HEK293 (cell line): ENCODE measurements at regions of chr19 and their contacts with region 1.

Region 1: DNA sequence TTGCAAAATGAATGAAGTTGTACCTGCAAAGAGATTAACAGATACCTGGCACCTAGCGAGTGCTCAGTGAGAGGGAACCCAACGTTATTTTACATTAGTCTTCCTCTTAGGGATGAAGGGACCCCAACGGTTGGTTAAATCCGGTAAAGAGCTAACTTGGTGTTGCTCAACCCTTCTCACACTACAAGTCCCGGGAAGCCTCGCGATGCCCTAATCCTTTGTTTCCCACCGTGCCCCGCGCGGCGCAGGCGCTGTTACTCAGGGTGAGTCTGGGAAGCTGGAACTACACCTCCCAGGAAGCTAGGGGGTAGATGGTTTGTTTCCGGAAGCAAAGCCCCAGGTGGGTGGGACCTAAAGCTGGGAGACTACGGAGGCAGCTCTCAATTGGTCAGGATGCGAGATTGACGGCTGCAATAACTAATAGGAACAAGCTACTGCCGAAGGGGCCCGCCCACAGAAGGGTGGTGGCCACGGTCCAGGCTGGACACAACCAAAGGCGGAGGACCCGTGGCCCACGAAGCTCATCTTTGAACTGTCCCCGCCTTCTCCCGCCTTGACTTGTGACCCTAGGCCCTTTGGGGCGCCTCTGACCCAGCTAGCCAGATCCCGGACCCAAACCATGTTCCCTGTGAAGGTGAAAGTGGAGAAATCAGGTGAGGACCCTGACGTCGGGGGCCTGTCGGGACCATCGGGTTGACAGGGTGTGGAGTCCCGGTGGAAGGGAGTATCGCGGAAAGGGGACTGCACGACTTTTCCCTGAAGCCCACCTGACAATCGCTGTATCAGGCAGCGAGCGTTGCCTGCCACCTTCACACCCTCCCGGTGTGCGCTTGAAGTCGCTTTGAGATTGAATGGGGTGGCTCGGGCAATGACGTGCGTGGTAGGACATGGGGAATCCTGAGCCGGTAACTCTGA is at the start of gene LIN37:
- H3K4me3 ChIP-seq: peak within 1 kb of the TSS; percentile 63
- H3K27ac ChIP-seq: peak within 1 kb of the TSS; percentile 68
- H3K4me1 ChIP-seq: peaks cover 30% of the 10 kb centered on the region
- CTCF ChIP-seq: no peak

Region 2: DNA sequence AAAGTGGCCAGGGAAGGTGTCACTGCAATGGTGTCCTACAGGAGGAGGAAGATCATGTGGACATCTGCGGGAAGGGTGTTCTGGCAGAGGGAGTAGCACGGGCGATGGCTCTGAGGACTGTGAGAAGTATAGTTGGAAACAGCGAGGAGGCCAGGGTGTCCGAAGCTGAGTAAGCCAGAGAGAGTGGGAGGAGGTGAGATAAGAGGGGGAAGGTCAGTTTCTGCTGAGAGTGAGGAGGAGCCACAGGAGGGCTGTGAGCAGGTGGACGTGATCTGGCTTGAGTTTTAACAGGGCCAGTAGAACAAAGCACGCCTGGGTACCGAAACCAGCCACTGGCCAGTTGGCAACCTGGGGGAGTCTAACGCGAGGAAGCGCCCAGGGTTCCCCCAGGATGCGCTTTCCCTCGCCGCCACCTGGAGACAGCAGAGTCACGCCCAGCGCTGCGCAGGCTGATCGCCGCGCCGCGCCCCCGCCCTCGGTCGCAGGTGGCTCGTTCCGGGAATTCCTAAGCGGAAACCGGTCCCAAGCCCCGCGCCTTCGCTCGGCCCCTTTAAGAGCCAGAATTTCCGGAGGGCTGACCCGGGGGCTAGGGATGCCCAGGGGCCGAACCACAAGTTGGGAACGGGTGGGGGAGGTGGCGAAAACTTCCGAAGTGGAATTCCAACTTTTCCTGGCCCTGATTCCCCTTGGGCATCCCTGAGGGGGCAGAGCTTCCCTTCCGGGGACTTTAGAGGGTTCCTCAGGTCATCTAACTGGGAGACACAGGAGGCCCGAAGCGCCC is 500.6 kb before region 1 on chr19:
- CTCF ChIA-PET with region 1: no interaction called
- POLR2A ChIA-PET with region 1: interaction called, 11 read pairs
- H3K4me3 ChIP-seq: peak overlapping the region; percentile 63
- H3K27ac ChIP-seq: peak overlapping the region; percentile 98
- H3K4me1 ChIP-seq: peaks cover 9% of the 10 kb centered on the region
- CTCF ChIP-seq: peak; percentile 95

Region 3: DNA sequence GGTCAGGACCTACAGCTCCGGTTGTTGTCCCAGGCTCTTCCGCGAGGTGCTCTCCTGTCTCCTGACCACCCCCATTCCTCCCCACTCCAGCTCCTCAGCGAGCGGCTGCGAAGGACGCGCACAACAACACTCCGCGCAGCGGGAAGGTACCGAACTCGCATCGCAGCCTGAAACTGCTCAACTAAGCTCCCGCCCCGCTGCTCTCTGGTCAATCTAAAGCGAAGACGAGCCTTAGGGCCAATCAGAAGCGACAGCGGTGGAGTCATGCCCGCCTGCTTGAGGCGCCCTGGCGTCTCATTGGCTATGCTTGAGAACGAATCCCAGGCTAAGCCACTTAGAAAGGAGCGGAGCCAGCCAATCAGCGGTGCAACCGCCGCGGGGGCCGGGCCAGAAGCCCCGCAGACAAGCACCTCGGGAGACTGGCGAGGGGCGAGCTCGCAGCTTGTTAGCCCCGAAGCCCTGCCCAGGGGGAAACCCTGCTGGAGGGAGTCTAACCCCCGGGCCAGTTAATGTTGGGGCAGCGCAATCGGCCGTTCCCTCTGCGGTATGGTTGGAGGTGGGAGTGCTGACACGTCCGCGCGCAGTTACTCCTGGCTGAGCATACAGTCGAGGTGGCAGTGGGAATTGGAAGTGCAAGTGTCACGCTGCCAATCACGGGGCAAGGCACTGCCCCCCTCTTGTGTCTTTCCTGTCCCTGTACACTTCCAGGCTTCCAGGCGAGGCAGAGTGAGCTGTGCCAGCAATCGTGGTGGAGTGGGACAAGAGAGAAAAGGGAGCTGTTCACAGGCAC is 45.9 kb before region 1 on chr19:
- CTCF ChIA-PET with region 1: no interaction called
- POLR2A ChIA-PET with region 1: interaction called, 20 read pairs
- H3K4me3 ChIP-seq: peak overlapping the region; percentile 50
- H3K27ac ChIP-seq: peak overlapping the region; percentile 56
- H3K4me1 ChIP-seq: peaks cover 6% of the 10 kb centered on the region
- CTCF ChIP-seq: peak; percentile 51; the same call in 1 of the 2 replicates

Region 4: DNA sequence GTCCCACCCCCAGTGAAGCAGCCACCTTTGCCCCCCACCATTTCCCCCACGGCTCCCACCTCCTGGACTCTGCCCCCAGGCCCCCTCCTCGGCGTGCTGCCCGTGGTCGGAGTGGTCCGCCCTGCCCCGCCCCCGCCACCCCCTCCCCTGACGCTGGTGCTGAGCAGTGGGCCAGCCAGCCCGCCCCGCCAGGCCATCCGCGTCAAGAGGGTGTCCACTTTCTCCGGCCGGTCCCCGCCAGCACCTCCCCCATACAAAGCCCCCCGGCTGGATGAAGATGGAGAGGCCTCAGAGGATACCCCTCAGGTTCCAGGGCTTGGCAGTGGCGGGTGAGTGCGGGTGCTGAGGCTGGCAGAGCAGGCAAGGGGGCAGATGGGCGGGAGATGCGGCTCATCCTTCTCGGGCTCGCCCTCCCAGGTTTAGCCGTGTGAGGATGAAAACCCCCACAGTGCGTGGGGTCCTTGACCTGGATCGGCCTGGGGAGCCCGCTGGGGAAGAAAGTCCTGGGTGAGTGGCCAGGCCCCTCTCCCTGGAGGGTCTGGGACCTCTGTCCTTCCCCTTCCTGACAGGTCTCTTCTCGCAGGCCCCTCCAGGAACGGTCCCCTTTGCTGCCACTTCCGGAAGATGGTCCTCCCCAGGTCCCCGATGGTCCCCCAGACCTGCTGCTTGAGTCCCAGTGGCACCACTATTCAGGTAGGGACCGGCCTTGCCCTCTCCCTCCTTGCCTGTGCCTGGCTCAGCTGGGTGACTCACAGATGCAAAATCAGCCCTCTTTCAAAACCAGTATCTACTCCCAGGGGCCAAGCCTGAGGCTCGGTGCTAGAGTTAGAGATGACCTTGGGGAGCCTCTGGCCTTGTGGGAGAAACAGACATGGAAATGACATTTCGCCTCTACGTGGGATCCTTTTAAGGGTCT is 14.9 kb before region 1 on chr19:
- CTCF ChIA-PET with region 1: interaction called, 6 read pairs
- POLR2A ChIA-PET with region 1: interaction called, 28 read pairs
- H3K4me3 ChIP-seq: no peak overlapping the region
- H3K27ac ChIP-seq: 0 out of 2 replicates have a peak overlapping the region, but pooled peaks have one; percentile 5
- H3K4me1 ChIP-seq: no peaks in the 10 kb centered on the region
- CTCF ChIP-seq: no peak

Region 5: DNA sequence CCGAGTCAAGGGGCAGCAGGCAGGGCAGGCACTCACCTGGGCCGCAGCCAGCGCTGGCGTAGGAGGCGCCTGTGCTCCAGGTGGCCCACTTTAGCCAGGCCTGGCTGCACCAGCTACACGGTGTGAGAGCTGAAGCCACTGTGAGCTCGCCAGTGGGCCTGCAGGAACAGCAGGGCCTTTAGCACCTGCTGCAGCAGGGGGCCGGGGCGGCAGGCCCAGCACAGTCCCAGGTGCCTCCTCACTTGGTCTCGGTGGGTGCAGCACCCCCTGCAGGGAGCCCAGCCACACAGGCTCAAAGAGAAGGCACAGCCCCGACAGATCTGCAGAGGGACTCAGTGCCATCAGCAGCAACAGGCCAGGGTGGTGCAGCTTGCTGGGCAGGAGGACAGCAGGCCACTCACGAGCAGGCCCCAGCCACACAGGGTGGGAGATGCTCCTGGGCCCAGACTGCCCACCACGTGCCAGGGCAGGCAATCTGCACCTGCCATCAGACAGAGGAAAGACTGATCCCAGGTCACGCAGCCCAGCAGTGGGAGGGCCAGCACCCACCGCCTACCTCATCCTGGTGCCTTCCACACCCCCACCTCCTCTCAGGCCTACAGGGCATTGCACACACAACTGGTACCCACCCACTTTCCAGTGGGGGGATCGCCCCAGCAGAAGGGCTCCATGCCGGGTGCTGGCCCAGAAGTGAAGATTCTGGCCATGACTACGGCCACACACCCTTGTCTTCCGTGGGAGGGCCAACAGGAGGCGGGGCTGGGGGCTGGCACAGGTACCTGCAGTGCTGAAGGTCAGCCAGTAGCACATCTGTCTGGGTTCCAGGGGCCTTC is 42.8 kb after region 1 on chr19:
- CTCF ChIA-PET with region 1: no interaction called
- POLR2A ChIA-PET with region 1: no interaction called
- H3K4me3 ChIP-seq: no peak overlapping the region
- H3K27ac ChIP-seq: peak overlapping the region; percentile 31
- H3K4me1 ChIP-seq: no peaks in the 10 kb centered on the region
- CTCF ChIP-seq: peak; percentile 83

Region 6: DNA sequence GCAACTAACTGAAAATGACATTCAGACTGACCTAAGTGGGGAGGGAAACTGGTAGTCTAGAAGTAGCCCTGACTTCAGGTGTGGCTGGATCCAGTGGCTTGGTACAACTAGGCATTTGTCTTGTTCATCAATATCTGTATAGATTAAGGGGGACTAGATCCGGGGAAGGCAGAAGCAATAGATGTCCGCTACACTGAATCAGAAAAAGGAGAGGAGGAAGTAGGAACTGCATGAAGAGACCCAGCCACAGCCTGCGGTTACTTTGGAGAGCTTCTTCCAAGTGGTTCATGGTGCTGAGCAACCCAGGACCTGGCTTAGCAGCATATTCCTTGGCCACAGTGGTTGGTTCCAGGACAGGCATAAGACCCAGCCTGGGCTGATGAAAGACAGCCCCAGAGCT is 74.2 kb after region 1 on chr19:
- CTCF ChIA-PET with region 1: interaction called, 9 read pairs
- POLR2A ChIA-PET with region 1: interaction called, 12 read pairs
- H3K4me3 ChIP-seq: no peak overlapping the region
- H3K27ac ChIP-seq: no peak overlapping the region
- H3K4me1 ChIP-seq: peaks cover 4% of the 10 kb centered on the region
- CTCF ChIP-seq: no peak

Region 7: DNA sequence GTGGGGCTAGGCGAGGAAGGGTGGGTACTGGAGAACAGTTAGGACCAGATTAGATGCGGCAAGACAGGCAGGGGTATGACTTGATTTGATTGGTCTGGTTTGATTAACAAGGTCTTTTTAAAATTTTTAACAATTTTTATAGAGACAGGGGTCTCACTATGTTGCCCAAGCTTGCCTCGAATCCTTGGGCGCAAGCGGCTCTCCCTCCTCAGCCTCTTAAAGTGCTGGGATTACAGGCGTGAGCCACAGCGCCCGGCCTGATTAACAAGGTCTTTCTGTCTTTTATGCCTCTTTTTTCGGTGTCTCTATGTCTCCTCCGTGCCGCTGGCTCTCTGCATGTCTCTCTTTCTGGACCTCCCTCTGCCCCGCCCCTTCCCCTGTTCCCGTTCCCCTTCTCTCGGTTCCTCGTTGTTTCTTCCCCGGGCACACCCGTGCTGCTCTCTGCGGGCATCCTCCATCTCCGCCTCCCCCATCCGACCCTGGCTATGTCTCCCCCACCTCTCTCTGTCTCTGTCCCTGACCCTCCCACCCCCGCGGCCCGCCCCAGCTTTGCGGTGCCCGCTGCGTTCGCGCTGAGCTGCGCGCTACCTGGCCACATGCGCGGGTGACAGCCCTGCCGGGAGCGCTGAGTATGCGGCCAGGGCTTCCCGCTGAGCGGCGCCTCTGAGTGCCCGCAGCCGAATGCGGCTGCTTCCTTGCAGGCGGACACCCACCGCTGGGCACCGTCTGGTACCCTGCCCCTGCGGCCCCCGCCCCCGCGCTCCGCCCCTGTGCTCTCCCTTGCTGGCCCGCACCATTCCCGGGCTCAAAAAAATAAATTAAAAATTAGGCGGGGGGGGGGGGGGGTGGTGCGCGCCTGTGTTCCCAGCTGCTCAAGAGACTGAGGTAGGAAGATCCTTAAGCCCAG is 238.6 kb after region 1 on chr19:
- CTCF ChIA-PET with region 1: no interaction called
- POLR2A ChIA-PET with region 1: no interaction called
- H3K4me3 ChIP-seq: peak overlapping the region; percentile 20
- H3K27ac ChIP-seq: no peak overlapping the region
- H3K4me1 ChIP-seq: peaks cover 8% of the 10 kb centered on the region
- CTCF ChIP-seq: peak; percentile 66; the same call in 1 of the 2 replicates

Region 8: GRCh38 chr19:36054119-36054732 is 305.9 kb after region 1 on chr19 and contains the start of gene THAP8:
- CTCF ChIA-PET with region 1: interaction called, 3 read pairs
- POLR2A ChIA-PET with region 1: interaction called, 13 read pairs
- H3K4me3 ChIP-seq: peak within 1 kb of the TSS; percentile 58
- H3K27ac ChIP-seq: peak within 1 kb of the TSS; percentile 93
- H3K4me1 ChIP-seq: peaks cover 38% of the 10 kb centered on the region
- CTCF ChIP-seq: peak; percentile 92